PC-3 (cell line): ENCODE measurements at regions of chr1 and their contacts with region 1.

Region 1: DNA sequence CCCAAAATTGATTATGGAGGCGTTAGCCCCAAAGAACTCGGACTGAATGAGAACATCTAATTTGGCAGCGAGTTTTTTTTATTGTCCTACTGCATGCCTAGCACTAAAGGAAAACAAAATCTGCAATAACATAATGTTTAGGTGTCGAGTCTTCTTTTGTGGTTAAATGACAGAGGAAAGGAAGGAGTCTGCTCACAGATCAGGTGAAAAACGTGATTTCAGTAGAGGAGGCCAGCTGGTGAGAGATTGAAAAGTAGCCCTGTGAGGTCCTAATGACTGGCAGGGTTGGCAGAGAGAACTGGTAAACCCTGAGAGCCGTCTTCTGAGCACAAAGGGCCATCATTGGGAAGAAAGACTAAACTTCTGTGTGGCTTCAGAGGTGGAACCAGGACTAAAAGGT is 24.2 kb downstream of the WDTC1 start:
- DNase-seq: no peak
- ATAC-seq: no peak
- H3K4me3 ChIP-seq: no peak overlapping the region
- H3K27ac ChIP-seq: no peak overlapping the region
- H3K4me1 ChIP-seq: no peaks in the 10 kb centered on the region
- H3K27me3 ChIP-seq: no peaks in the 10 kb centered on the region
- CTCF ChIP-seq: no peak

Region 2: DNA sequence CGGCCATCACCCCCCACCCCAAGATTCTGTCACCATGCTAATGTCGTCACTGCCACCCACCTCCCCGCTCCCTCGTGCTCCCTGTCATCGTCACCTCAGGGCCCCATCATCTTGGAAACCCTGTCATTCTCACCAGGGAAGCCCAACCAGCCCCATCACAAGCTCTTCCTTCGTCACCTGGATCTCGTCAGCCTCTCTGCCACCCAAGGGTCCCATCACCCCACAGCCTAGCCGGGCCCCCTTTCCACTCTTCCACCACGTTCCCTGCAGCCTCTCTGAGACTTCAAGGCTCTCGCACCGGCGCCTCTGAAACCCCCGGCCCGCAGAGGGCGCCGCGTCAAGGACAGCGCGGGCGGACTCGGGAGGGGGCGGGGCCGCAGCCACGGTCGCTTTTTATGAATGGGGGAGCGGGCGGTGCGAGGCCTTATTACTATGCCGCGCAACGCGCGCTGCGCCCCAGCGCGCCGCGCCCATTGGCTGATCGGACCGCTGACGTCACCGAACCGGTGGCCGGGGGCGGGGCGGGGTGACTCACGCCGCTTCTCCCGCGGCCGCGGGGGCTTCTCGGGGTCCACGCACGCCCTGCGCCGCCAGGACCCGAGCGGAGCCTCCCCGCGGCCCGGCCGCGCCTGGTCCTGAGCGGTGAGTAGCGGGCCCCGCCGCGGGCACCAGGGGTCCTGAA is 133.6 kb after region 1 on chr1 and contains the start of gene GPR3:
- CTCF ChIA-PET with region 1: interaction called, 12 read pairs
- POLR2A ChIA-PET with region 1: no interaction called
- intact Hi-C with region 1: no loop called
- DNase-seq: peak; percentile 94
- ATAC-seq: peak; percentile 82
- H3K4me3 ChIP-seq: peak within 1 kb of the TSS; percentile 100
- H3K27ac ChIP-seq: peak within 1 kb of the TSS; percentile 64
- H3K4me1 ChIP-seq: peaks cover 25% of the 10 kb centered on the region
- H3K27me3 ChIP-seq: no peaks in the 10 kb centered on the region
- CTCF ChIP-seq: peak; percentile 65
- total RNA-seq, gene GPR3: 4.7 TPM in 2 replicates